Common myeloid progenitor, CD34-positive (primary cell): ENCODE measurements at regions of chr6 and their contacts with region 1.

Region 1: GRCh38 chr6:3742426-3743344 is 8.8 kb downstream of the PXDC1 start:
- DNase-seq: peak; percentile 83 to 90 (median 89)
- H3K4me3 ChIP-seq: peak overlapping the region in 5 of 7 experiments; percentile 1 to 68 (median 46)
- H3K27ac ChIP-seq: no peak overlapping the region
- H3K4me1 ChIP-seq: peaks cover 0 to 34% (median 31%) of the 10 kb centered on the region in 4 experiments
- H3K27me3 ChIP-seq: no peaks in the 10 kb centered on the region

Region 2: GRCh38 chr6:3822747-3823450 is 80.2 kb after region 1 on chr6:
- CTCF ChIA-PET with region 1: no interaction called
- POLR2A ChIA-PET with region 1: no interaction called
- DNase-seq: peak in 1 of 3 donors; percentile 28
- H3K4me3 ChIP-seq: no peak overlapping the region
- H3K27ac ChIP-seq: no peak overlapping the region
- H3K4me1 ChIP-seq: no peaks in the 10 kb centered on the region
- H3K27me3 ChIP-seq: no peaks in the 10 kb centered on the region

Region 3: GRCh38 chr6:3848925-3849605 is 106.4 kb after region 1 on chr6 and contains the start of gene FAM50B:
- CTCF ChIA-PET with region 1: interaction called, 13 read pairs
- POLR2A ChIA-PET with region 1: no interaction called
- DNase-seq: peak; percentile 85 to 92 (median 91)
- H3K4me3 ChIP-seq: peak within 1 kb of the TSS; percentile 28 to 84 (median 64)
- H3K27ac ChIP-seq: peak within 1 kb of the TSS in 1 of 2 experiments; percentile 34
- H3K4me1 ChIP-seq: peaks cover 0 to 11% (median 3%) of the 10 kb centered on the region in 4 experiments
- H3K27me3 ChIP-seq: no peaks in the 10 kb centered on the region

Region 4: DNA sequence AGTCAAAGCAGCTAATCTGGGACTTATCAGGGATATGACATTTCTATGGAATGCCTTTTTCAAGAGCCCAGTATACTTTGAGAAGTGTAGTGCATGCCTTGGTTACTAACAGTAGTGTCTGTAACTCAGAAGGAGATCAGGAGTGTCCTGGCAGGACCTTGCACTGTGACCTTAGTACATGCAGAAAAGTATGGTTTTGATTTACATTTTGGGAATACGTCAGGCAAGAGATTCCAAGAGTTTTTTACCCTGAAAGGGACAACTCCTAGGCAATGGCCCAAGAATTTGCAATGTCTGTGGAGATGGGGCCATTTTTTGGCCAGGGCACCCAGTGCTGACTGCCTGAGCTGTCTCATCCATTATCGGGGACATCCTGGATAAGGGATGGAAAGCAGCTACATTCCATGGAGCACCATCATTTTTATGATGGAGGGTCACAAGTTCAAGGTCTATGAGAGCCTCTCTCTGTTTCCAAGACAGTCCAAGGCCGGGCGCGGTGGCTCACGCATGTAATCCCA is 186.7 kb after region 1 on chr6:
- CTCF ChIA-PET with region 1: interaction called, 16 read pairs
- POLR2A ChIA-PET with region 1: no interaction called
- DNase-seq: no peak
- H3K4me3 ChIP-seq: no peak overlapping the region
- H3K27ac ChIP-seq: no peak overlapping the region
- H3K4me1 ChIP-seq: no peaks in the 10 kb centered on the region
- H3K27me3 ChIP-seq: no peaks in the 10 kb centered on the region

Region 5: DNA sequence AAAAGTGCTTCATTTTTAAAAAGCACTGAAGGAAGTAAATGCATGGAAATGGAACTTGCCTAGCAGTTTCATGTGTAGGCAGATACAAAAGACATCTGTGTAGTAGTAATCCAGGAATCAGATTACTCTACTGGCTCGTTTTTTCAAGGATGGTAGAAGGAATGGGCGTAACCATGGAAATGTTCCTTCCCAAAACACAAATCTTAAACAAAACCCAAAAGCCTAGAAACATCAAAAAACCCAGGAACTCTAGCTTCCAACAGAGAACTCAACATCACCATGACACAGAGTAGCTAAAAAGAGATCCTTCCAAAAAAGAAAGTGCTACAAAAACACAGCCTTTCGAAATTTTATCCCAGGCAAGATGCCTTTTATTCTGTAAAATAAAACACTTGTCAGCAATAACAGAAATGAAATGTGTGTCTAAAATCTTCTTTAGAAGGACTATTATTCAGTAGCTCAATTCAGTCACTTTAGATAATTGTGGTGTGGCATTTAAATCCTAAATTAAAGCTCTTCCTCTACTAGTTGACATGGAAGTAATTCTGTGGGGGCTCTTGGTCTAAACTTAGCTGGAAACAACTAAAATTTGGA is 254.6 kb after region 1 on chr6:
- CTCF ChIA-PET with region 1: interaction called, 14 read pairs
- POLR2A ChIA-PET with region 1: no interaction called
- DNase-seq: no peak
- H3K4me3 ChIP-seq: no peak overlapping the region
- H3K27ac ChIP-seq: no peak overlapping the region
- H3K4me1 ChIP-seq: peaks cover 0 to 2% (median 0%) of the 10 kb centered on the region in 4 experiments
- H3K27me3 ChIP-seq: no peaks in the 10 kb centered on the region

Region 6: DNA sequence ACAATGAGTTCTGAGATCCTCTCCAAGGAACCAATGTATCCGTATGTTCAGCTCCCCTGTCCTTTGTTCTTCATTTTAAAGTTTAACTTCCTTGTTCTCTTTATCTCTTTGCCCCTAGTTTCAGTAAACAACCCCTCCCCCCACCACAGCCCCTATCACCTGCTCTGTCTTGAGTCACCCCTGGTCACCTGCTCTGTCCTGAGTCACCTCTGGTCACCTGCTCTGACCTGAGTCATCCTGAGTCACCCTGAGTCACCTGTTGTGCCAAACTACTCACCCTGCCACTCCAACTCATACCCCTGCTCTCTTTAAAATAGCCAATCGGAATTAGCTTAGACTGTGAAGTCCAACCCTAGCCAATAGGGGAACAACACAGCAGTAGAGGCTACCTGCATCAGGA is 744.9 kb after region 1 on chr6:
- CTCF ChIA-PET with region 1: no interaction called
- POLR2A ChIA-PET with region 1: no interaction called
- DNase-seq: no peak
- H3K4me3 ChIP-seq: no peak overlapping the region
- H3K27ac ChIP-seq: no peak overlapping the region
- H3K4me1 ChIP-seq: no peaks in the 10 kb centered on the region
- H3K27me3 ChIP-seq: no peaks in the 10 kb centered on the region